Heart left ventricle (tissue), 16 donors: ENCODE measurements at regions of chr2 and their contacts with region 1.

Region 1: DNA sequence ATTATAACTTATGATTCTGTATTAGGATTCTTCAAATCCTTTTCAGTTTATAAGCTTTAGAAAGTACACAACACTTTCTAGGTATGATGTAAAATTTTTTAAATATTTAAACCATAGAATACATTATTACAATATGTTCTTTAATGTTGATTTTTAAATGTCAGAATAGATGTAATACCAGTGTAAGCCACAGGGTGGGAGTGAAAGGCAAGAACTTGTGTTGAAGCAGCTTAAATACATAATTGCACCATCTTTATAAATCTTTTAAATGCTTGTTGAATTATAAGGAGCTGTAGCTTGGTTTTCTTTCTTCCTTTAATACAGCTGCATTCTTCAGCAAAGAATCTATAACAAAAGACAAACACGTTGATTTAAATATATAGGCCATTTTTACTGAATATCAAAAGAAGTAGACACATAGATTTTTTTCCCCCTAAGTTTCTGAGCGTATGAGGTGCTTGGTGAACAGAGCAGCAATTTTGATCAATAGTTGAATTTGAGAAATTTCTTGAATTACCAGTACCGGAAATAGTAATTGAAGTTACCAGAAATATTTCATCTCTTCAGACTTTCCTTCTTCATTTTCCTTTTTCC is 63.0 kb downstream of the TANK start:
- DNase-seq: no peak
- ATAC-seq: peak in 1 of 4 donors; percentile 50
- H3K4me3 ChIP-seq: no peak overlapping the region
- H3K27ac ChIP-seq: no peak overlapping the region
- H3K4me1 ChIP-seq: no peaks in the 10 kb centered on the region
- H3K27me3 ChIP-seq: no peaks in the 10 kb centered on the region
- CTCF ChIP-seq: peak; percentile 69 to 88 (median 76)
- POLR2A ChIP-seq: no peak

Region 2: GRCh38 chr2:161273038-161273760 is 50.0 kb after region 1 on chr2:
- intact Hi-C with region 1: loop called in 9 of 10 experiments (anchors 2 to 5 kb)
- DNase-seq: no peak
- ATAC-seq: no peak
- H3K4me3 ChIP-seq: no peak overlapping the region
- H3K27ac ChIP-seq: no peak overlapping the region
- H3K4me1 ChIP-seq: no peaks in the 10 kb centered on the region
- H3K27me3 ChIP-seq: no peaks in the 10 kb centered on the region
- CTCF ChIP-seq: peak; percentile 66 to 86 (median 75)
- POLR2A ChIP-seq: no peak